ENCODE measurements at regions of chr14 and their contacts with region 1.

Region 1: DNA sequence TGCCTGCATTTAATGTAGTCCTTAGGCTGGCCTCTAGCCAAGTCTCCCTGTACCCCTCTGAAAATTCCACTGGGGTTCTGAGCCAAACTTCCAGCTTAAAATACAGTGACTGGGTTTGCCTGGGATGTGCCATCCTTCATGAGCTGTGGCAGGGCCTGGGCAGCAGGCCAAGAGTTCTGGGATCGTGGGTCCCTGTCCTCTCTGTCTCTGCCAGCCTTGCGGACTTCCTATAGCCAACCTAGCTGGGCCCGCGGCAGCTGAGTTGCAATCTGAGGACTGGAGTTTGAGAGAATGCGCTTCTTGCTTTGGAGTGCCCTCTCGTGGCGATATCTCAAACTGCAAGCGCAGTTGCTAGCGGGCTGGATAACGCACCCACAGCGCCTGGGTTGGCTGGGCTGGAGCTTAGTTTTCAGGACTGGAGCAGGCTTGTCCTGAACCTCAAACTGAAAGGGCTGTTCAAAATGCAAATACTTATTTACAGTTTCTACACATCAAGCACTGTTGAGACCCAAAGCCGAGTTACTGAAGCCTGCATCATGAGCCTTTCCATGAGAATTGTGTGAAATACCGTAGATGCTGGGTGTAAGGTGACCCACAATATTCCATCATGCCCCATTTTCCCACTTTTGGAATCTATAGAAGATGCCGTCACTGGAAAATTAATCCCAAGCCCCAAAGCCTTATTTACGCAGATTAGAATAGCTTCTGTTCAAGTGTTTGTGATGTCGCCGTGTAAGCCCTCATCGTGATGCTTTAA is 7.3 kb upstream of the IFI27L2 start:
- DNase-seq: peak; percentile 26
- H3K4me3 ChIP-seq: no peak overlapping the region
- H3K27ac ChIP-seq: no peak overlapping the region
- H3K4me1 ChIP-seq: no peaks in the 10 kb centered on the region
- H3K27me3 ChIP-seq: peaks cover 0 to 11% (median 0%) of the 10 kb centered on the region in 4 donors
- CTCF ChIP-seq: peak; percentile 87 to 99 (median 97)
- POLR2A ChIP-seq: no peak

Region 2: GRCh38 chr14:93914278-93914677 is 222.5 kb before region 1 on chr14:
- intact Hi-C with region 1: no loop called
- DNase-seq: no peak
- H3K4me3 ChIP-seq: no peak overlapping the region
- H3K27ac ChIP-seq: no peak overlapping the region
- H3K4me1 ChIP-seq: peaks cover 0 to 6% (median 0%) of the 10 kb centered on the region in 3 donors
- H3K27me3 ChIP-seq: no peaks in the 10 kb centered on the region
- CTCF ChIP-seq: no peak
- POLR2A ChIP-seq: no peak

Region 3: DNA sequence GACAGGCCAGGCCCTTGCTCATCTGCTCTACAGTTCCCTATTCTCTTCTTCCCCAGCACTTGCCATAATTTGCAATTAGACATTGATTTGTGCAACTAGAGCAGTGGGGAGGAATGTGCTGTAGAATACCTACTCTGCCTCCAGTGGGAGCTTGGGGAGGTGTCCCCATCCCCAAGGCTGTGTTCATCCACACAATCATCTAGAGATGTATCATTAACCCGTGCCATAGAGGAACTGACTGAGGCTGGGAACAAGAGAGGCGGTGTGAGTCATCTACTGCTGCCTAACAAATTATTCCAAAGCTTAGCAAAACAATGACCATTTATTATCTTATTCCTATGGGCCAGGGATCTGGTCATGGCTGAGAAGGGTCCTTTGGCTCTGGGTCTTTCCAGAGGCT is 115.8 kb before region 1 on chr14:
- intact Hi-C with region 1: no loop called
- DNase-seq: no peak
- H3K4me3 ChIP-seq: no peak overlapping the region
- H3K27ac ChIP-seq: no peak overlapping the region
- H3K4me1 ChIP-seq: peaks cover 0 to 14% (median 3%) of the 10 kb centered on the region in 3 donors
- H3K27me3 ChIP-seq: peaks cover 0 to 12% (median 0%) of the 10 kb centered on the region in 4 donors
- CTCF ChIP-seq: no peak
- POLR2A ChIP-seq: no peak

Region 4: GRCh38 chr14:94031161-94031882 is 105.4 kb before region 1 on chr14:
- intact Hi-C with region 1: loop called (anchors 5 kb)
- DNase-seq: no peak
- H3K4me3 ChIP-seq: no peak overlapping the region
- H3K27ac ChIP-seq: no peak overlapping the region
- H3K4me1 ChIP-seq: peaks cover 7 to 25% (median 15%) of the 10 kb centered on the region in 3 donors
- H3K27me3 ChIP-seq: no peaks in the 10 kb centered on the region
- CTCF ChIP-seq: no peak
- POLR2A ChIP-seq: no peak

Region 5: DNA sequence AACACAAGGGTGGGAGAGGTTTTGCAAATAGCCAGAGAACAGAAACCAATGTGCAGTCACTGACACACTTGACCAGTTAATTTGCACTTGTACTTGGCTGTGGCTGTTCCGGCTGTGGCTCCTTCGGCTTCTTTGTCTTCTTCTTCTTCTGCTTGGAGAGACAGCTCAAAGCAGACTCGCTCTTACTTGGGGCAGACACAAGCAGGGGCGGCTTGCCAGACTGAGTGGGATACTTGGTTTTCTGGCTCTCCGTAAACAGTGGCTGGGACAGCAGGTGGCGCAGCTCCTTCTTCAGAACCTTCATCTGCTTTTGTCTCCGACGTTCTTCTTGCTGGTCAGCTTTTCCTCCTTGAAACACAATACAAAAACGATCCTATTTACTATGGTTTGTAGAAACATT is 85.6 kb before region 1 on chr14:
- intact Hi-C with region 1: loop called (anchors 5 kb)
- DNase-seq: no peak
- H3K4me3 ChIP-seq: no peak overlapping the region
- H3K27ac ChIP-seq: no peak overlapping the region
- H3K4me1 ChIP-seq: peaks cover 0 to 12% (median 0%) of the 10 kb centered on the region in 3 donors
- H3K27me3 ChIP-seq: no peaks in the 10 kb centered on the region
- CTCF ChIP-seq: peak in 5 of 6 experiments; percentile 25 to 53 (median 48)
- POLR2A ChIP-seq: no peak

Region 6: DNA sequence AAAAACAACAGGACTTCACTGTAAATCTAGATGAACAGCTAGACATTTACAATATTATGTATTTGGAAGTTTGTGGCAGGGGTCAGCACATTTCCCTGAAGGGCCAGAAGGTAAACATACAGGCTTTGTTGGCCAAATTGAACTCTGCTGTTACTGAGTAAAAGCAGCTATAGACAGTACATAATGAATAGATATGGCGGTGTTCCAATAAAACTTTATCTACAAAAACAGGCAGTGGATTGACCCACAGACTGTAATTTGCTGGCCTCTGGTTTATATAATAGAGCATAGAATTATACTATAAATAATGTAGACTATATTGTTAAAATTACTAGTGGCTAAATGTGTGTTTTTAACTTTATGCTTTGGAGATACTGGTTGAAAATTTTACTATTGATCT is 130.6 kb after region 1 on chr14:
- intact Hi-C with region 1: no loop called
- DNase-seq: no peak
- H3K4me3 ChIP-seq: no peak overlapping the region
- H3K27ac ChIP-seq: no peak overlapping the region
- H3K4me1 ChIP-seq: no peaks in the 10 kb centered on the region
- H3K27me3 ChIP-seq: no peaks in the 10 kb centered on the region
- CTCF ChIP-seq: no peak
- POLR2A ChIP-seq: no peak

Region 7: GRCh38 chr14:94921882-94922585 is 785.3 kb after region 1 on chr14:
- intact Hi-C with region 1: no loop called
- DNase-seq: no peak
- H3K4me3 ChIP-seq: no peak overlapping the region
- H3K27ac ChIP-seq: no peak overlapping the region
- H3K4me1 ChIP-seq: no peaks in the 10 kb centered on the region
- H3K27me3 ChIP-seq: peaks cover 0 to 2% (median 0%) of the 10 kb centered on the region in 4 donors
- CTCF ChIP-seq: no peak
- POLR2A ChIP-seq: no peak

Measured in esophagus squamous epithelium (tissue), 5 donors.